ENCODE measurements at regions of chr9 and their contacts with region 1.

Region 1: DNA sequence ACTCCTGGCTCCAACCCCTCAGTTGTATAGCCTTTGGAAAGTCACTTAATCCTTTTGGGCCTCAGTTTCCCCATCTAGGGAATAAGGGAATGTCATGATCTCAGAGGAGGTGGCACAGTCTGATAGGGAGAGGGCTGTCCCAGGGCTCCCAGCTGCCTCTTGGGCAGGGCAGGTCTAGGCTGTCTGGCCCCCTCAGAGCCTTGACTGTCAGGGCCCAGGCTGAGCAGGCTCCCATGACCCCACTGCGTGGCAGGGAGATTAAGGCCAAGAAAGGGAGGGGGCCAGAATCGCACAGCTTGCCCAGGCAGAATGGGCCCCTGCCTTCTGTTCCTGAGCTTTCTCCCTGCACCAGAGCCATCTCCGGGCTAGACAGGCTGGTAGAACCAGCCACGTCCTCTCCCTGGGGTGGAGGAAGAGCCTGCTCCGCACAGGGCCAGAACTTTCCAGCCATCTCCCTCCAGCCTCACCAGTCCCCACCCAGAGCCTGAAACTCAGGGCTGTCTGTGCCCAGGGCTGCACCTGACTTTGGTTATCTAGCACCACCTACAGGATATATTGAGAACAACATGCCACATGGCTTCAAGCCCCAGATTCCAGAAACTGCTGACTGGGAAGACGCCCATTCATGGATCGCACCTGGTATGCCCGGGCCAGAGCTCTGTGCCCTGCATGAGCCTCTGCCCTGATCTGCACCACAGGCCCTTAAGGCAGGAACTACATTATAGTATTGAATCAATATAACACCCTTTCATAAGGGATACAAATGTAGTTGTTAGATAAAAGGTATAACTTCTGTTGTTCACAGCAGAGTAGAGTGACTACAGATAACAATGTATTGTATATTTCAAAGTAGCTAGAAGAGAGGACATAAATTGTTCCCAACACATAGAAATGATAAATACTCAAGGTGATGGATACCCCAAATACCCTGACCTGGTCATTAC is 32.0 kb downstream of the NAIF1 start:
- DNase-seq: peak; percentile 78
- H3K4me3 Mint-ChIP-seq: no peak overlapping the region
- H3K27ac Mint-ChIP-seq: peak overlapping the region; percentile 62
- H3K4me1 Mint-ChIP-seq: peaks cover 40% of the 10 kb centered on the region
- H3K27me3 Mint-ChIP-seq: no peaks in the 10 kb centered on the region

Region 2: GRCh38 chr9:127916665-127917613 is 118.2 kb before region 1 on chr9 and contains the start of gene ST6GALNAC4:
- CTCF ChIA-PET with region 1: interaction called, 16 read pairs
- intact Hi-C with region 1: no loop called
- DNase-seq: peak; percentile 97
- H3K4me3 Mint-ChIP-seq: peak within 1 kb of the TSS; percentile 83
- H3K27ac Mint-ChIP-seq: peak within 1 kb of the TSS; percentile 84
- H3K4me1 Mint-ChIP-seq: peaks cover 50% of the 10 kb centered on the region
- H3K27me3 Mint-ChIP-seq: no peaks in the 10 kb centered on the region
- total RNA-seq, gene ST6GALNAC4: 22.3 to 24.6 TPM

Region 3: DNA sequence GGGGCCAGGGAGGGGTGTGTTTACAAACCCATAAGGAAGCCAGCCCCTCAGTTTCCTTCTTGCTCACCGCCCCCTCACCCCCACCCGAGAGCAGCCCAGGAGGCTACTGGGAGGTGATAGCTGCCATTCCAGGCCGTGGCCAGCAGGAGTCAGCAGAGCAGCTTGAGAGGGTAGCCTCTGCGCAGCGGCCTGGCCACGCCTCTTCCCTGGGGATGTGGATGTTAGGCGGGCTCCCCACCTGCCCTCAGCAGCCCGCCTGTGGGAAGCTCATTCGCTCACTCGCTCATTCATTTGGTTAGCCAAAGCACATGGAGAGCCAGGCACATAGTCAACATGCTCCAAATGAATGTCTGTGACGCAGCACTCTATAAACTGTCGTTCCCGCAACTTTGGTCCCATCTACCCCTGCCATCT is 91.4 kb before region 1 on chr9:
- CTCF ChIA-PET with region 1: interaction called, 212 read pairs
- intact Hi-C with region 1: loop called (anchors 1 kb)
- DNase-seq: peak; percentile 89
- H3K4me3 Mint-ChIP-seq: no peak overlapping the region
- H3K27ac Mint-ChIP-seq: peak overlapping the region; percentile 82
- H3K4me1 Mint-ChIP-seq: peaks cover 37% of the 10 kb centered on the region
- H3K27me3 Mint-ChIP-seq: no peaks in the 10 kb centered on the region

Region 4: DNA sequence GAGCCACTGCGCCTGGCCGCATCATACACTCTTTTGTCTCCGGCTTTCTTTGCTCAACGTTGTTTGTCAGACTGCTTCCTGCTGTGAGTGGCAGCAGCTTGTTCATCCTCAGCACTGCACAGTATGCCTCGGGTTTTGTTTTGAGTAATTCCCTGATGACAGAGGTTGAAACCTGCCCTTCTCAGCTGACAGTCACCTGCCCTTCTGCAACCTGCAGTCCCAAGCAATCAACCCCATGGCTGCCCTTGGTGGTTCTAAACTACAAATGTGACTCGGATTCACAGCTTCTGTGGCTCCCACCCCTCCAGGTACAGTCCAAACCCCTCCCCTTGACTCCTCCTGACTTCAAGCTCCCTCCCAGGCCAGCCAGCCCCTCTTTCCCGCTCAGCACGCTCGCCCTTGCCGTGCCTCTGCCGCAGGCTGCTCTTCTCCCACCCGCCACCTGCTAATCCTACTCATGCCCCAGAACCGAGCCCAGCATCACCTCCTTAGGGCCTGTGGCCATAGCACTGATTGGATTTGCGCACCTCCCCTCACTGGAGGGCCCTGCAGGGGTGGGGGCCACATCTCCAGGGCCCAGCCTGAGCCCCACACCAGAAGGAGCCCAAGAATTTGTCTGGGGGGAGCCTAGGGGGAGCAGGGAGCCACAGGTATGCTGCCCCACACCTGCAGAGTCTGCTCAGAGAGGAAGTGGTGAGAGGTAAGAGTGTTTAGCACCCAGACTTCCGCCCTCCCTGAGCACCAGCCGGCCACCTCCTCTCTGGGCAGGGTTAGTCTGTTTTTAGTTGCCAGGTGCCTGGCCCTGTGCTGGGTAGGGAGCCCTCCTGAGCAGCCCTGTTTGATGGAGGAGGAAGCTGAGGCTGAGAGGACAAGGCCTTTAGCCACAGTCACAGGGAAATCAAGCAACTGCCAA is 64.4 kb before region 1 on chr9:
- CTCF ChIA-PET with region 1: interaction called, 142 read pairs
- intact Hi-C with region 1: loop called (anchors 1 kb)
- DNase-seq: peak; percentile 93
- H3K4me3 Mint-ChIP-seq: peak overlapping the region; percentile 72
- H3K27ac Mint-ChIP-seq: peak overlapping the region; percentile 99
- H3K4me1 Mint-ChIP-seq: peaks cover 96% of the 10 kb centered on the region
- H3K27me3 Mint-ChIP-seq: no peaks in the 10 kb centered on the region

Region 5: GRCh38 chr9:128061275-128061960 is 26.3 kb after region 1 on chr9:
- CTCF ChIA-PET with region 1: interaction called, 18 read pairs
- intact Hi-C with region 1: no loop called
- DNase-seq: peak; percentile 18
- H3K4me3 Mint-ChIP-seq: peak overlapping the region; percentile 58
- H3K27ac Mint-ChIP-seq: peak overlapping the region; percentile 79
- H3K4me1 Mint-ChIP-seq: peaks cover 46% of the 10 kb centered on the region
- H3K27me3 Mint-ChIP-seq: no peaks in the 10 kb centered on the region